ENCODE measurements at regions of chr1 and their contacts with region 1.

Region 1: GRCh38 chr1:12619792-12620487 is 1.9 kb upstream of the DHRS3 start:
- DNase-seq: peak; percentile 96
- H3K4me3 ChIP-seq: peak overlapping the region; percentile 71 to 97 (median 77)
- H3K27ac ChIP-seq: peak overlapping the region; percentile 91 to 98 (median 95)
- H3K4me1 ChIP-seq: peaks cover 41 to 63% (median 60%) of the 10 kb centered on the region in 4 donors
- H3K27me3 ChIP-seq: no peaks in the 10 kb centered on the region
- CTCF ChIP-seq: peak; percentile 98 to 99 (median 99)
- EP300 ChIP-seq: no peak
- POLR2A ChIP-seq: no peak

Region 2: DNA sequence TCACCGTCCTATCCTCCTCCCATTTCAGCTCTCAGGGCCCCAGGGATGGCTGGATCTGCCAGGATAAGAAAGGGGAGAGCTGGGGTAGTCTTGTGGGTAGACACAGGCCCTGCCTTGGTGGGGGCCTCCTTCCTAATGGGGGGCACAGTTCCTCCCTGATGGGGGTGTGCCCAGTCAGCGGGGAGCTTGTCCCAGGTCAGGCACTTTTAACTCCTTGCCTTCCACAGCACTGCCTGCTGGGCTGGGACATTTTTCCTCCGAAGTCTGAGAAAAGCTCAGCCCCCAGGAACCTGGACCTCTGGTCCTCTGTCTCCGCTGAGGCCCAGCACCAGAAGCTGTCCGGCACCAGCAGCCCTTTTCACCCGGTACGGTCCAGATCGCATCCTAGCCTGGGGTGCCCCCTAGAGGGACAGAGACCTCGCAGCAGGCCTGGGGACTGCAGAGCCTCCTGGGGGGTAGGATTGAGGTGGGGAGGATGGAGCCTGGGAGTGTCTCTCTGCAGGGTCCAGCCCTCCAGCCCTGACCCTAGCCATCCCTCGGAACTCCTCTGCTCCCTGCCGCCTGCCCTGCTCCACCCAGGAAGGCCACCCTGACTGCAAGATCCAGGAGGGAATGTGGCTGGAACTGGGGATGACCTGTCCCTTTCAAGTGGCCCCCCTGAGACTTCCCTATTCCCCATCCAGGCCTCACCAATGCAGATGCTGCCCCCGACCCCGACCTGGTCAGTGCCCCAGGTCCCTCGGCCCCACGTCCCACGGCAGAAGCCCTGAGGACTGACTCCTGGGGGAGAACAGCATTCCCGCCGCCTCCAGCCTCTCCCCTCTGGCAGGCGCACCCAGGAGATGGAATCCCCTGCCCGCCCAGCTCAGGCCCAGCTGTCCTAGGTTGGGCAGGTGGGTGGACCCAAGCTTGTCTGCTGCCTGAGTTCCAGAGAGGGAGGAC is 588.6 kb before region 1 on chr1:
- intact Hi-C with region 1: no loop called
- DNase-seq: no peak
- H3K4me3 ChIP-seq: no peak overlapping the region
- H3K27ac ChIP-seq: no peak overlapping the region
- H3K4me1 ChIP-seq: peaks cover 0 to 4% (median 0%) of the 10 kb centered on the region in 4 donors
- H3K27me3 ChIP-seq: no peaks in the 10 kb centered on the region
- CTCF ChIP-seq: peak; percentile 34 to 64 (median 49)
- EP300 ChIP-seq: no peak
- POLR2A ChIP-seq: no peak

Region 3: GRCh38 chr1:12314333-12314903 is 305.5 kb before region 1 on chr1:
- intact Hi-C with region 1: loop called (anchors 1 kb)
- DNase-seq: no peak
- H3K4me3 ChIP-seq: no peak overlapping the region
- H3K27ac ChIP-seq: peak overlapping the region; percentile 76 to 89 (median 84)
- H3K4me1 ChIP-seq: peaks cover 17 to 71% (median 61%) of the 10 kb centered on the region in 4 donors
- H3K27me3 ChIP-seq: no peaks in the 10 kb centered on the region
- CTCF ChIP-seq: peak; percentile 53 to 71 (median 60)
- EP300 ChIP-seq: no peak
- POLR2A ChIP-seq: no peak

Region 4: DNA sequence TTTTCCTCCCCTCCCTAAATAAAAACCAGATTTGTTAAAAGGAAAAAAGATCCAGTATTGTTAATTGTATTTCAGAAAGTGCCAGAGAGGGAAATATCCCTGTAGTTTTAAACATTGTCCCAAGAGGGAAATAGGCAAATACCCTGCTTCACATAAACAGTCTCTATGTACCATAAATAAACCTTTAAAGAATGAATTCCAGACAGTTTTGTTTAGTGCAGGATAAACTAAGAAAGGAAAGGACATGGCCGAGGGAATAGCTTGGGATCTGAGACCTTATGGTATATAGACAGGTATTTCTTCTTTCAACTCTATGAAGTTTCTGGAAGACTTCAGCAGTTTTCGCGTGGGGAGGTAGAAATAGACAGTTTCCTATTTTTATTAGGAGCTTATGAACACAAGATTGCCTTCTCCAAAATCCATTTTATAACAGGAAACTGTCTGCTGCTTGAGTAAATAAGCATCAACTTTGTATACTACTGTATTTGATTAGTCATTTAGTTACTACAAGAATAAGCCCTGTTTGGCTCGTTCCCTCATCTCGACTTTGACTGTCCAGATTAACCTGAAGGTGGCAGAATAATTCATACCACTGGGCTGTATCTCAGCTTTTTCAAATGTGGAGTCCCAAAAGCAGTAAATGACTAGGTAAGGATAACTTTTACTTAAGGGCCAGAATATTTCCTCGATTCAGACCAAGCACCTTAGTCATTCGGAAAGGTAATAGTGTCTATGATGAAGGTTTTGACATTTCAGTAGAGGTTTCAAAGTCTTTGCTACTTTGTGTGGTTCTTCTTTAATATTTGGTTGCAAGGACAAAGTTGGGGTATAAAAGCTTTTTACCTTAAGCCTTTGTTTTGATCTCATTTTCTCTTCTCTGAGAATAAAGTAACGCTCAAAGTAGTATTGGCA is 212.6 kb before region 1 on chr1:
- intact Hi-C with region 1: loop called (anchors 5 kb)
- DNase-seq: no peak
- H3K4me3 ChIP-seq: no peak overlapping the region
- H3K27ac ChIP-seq: peak overlapping the region; percentile 72 to 84 (median 78)
- H3K4me1 ChIP-seq: peaks cover 40 to 73% (median 66%) of the 10 kb centered on the region in 4 donors
- H3K27me3 ChIP-seq: no peaks in the 10 kb centered on the region
- CTCF ChIP-seq: peak; percentile 47 to 50 (median 50)
- EP300 ChIP-seq: no peak
- POLR2A ChIP-seq: no peak

Region 5: DNA sequence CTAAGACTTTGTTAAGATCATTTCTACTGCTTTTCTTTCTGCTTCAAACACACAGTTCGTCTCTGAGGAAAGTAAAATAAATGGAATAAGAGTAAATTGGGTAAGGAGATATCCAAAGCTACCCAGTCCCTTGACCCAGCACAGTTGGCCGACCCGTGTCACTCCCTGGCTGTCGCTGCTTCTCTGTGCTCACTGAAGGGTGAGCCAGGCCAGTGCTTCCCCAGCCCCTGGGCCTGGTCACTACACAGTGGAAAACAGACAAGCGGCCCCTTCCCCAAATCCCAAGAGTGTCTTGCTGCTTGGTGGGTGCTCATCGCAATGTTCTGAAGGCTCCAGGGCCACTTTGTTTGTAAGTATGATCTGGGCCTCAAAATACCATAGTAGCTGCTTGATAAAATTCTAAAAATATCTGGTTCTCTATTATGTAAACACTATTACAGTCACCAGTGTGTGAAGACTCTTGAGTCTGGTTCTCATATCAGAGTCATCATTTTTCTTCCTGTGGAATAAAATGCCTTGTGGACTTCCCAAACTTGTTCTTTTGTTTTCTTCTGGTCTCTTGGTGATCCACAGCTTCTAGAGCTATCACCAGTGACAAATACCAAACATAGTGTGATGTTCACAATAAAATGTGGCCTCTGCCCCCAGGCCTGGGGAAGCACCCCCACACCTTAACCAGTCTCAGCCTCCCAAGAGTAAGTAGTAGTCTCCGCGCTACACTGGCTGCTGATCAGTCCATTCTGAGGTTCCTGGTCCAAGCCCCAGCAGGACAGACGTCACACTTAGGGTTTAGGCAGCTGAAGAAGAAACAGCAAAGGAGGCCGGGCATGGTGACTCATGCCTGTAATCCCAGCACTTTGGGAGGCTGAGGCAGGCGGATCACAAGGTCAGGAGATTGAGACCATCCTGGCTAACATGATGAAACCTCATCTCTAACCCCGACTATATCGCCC is 108.1 kb before region 1 on chr1:
- intact Hi-C with region 1: no loop called
- DNase-seq: no peak
- H3K4me3 ChIP-seq: peak overlapping the region in 1 of 4 donors; percentile 15
- H3K27ac ChIP-seq: peak overlapping the region; percentile 54 to 68 (median 68)
- H3K4me1 ChIP-seq: peaks cover 23 to 48% (median 39%) of the 10 kb centered on the region in 4 donors
- H3K27me3 ChIP-seq: no peaks in the 10 kb centered on the region
- CTCF ChIP-seq: no peak
- EP300 ChIP-seq: no peak
- POLR2A ChIP-seq: no peak

Region 6: GRCh38 chr1:12528021-12528852 is 91.7 kb before region 1 on chr1:
- intact Hi-C with region 1: no loop called
- DNase-seq: no peak
- H3K4me3 ChIP-seq: no peak overlapping the region
- H3K27ac ChIP-seq: peak overlapping the region in 1 of 4 donors; percentile 27
- H3K4me1 ChIP-seq: peaks cover 0 to 21% (median 13%) of the 10 kb centered on the region in 4 donors
- H3K27me3 ChIP-seq: no peaks in the 10 kb centered on the region
- CTCF ChIP-seq: no peak
- EP300 ChIP-seq: no peak
- POLR2A ChIP-seq: no peak

Region 7: DNA sequence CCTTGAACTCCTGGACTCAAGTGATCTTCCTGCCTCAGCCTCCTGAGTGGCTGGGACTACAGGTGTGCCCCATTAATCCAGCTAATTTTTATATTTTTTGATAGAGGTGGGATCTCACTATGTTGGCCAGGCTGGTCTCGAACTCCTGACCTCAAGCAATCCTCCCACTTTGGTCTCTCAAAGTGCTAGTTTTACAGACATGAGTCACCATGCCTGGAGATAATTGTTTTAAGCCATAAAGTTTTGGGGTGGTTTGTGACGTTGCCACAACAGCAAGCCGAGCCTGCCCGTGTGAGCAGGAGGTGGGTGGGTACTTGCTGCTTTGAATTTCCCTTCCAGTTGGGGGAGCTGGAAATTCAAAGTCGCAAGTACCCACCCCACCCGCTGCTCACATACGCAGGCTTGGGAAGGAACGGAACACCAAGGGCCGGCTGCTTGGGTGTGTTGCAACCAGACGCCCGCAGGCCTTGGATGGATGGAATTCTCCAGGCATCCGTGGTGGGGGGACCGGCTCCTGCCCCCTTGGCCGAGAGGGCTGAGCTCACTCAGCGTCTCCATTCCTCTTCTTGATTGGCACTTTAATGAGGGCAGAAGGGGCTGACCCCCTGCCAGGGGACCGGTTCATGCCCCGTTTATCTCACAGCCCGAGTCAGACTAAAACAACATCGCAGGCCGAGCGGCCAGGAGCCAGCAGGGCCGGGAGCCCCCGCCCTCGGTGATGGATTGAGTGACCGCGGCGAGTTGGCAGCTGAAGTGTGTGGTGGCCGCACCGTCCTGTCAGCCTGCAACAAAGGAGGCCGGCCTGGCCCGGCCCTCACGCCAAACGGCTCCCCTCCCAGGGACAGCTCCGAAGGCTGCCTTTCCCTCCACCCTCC is 80.0 kb before region 1 on chr1:
- intact Hi-C with region 1: loop called (anchors 5 kb)
- DNase-seq: peak; percentile 97
- H3K4me3 ChIP-seq: peak overlapping the region; percentile 19 to 32 (median 26)
- H3K27ac ChIP-seq: peak overlapping the region; percentile 84 to 90 (median 88)
- H3K4me1 ChIP-seq: peaks cover 20 to 39% (median 38%) of the 10 kb centered on the region in 4 donors
- H3K27me3 ChIP-seq: no peaks in the 10 kb centered on the region
- CTCF ChIP-seq: peak in 2 of 3 experiments; percentile 23 to 37
- EP300 ChIP-seq: peak; percentile 92
- POLR2A ChIP-seq: no peak

Region 8: GRCh38 chr1:12596007-12596821 is 23.7 kb before region 1 on chr1:
- intact Hi-C with region 1: loop called (anchors 2 kb)
- DNase-seq: peak; percentile 97
- H3K4me3 ChIP-seq: peak overlapping the region; percentile 47 to 57 (median 50)
- H3K27ac ChIP-seq: peak overlapping the region; percentile 92 to 95 (median 94)
- H3K4me1 ChIP-seq: peaks cover 98 to 100% (median 100%) of the 10 kb centered on the region in 4 donors
- H3K27me3 ChIP-seq: no peaks in the 10 kb centered on the region
- CTCF ChIP-seq: no peak
- EP300 ChIP-seq: peak; percentile 85
- POLR2A ChIP-seq: peak; percentile 7

Region 9: DNA sequence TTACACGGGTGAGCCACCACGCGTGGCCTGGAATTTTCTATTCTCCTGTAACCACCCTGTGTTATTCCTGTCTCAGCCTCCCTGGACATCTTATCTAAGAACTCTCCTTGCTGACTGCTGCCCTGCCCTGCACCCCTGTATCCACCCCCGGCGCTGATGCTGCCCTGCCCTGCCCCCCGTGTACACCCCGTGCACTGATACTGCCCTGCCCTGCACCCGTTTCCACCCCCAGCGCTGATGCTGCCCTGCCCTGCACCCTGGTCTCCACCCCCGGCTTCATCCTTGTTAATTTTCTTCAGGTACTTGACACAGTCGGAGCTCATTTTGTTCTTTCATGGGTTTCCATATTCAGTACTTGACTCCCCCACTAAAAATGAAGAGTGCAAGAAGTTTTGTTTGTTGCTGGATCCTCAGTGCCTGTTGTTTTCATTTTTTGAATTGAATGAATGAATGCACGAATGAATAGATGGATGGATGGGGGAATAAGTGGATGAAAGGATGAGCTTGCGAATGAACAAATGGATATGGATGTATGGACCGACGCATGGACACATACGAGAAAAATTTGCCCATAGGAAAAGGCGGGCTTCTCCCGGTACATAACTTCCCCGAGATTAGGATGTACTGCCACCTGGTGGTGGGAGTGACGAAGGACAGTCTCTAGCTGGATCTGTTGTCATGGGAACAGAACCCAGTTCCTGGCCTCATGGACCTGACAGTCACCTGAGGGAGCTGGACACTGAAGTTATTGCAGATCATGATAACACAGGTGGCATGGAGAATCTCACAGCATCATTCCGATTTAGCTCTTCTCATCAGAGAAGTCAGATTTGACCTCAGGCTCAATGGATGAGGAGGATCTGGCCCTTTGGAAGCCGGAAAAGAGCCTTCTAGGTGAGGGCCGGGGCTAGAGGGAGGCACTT is 38.9 kb after region 1 on chr1:
- intact Hi-C with region 1: loop called (anchors 2 kb)
- DNase-seq: no peak
- H3K4me3 ChIP-seq: no peak overlapping the region
- H3K27ac ChIP-seq: no peak overlapping the region
- H3K4me1 ChIP-seq: peaks cover 0 to 6% (median 5%) of the 10 kb centered on the region in 4 donors
- H3K27me3 ChIP-seq: no peaks in the 10 kb centered on the region
- CTCF ChIP-seq: peak; percentile 94 to 98 (median 97)
- EP300 ChIP-seq: no peak
- POLR2A ChIP-seq: no peak

Measured in esophagus muscularis mucosa (tissue), 4 donors.